Ovary (tissue), 10 donors: ENCODE measurements at regions of chr4 and their contacts with region 1.

Region 1: GRCh38 chr4:178215763-178216162 is 773.5 kb upstream of the AGA start:
- DNase-seq: no peak
- H3K4me3 ChIP-seq: no peak overlapping the region
- H3K27ac ChIP-seq: no peak overlapping the region
- H3K4me1 ChIP-seq: no peaks in the 10 kb centered on the region
- H3K27me3 ChIP-seq: peaks cover 3% of the 10 kb centered on the region
- CTCF ChIP-seq: no peak
- EP300 ChIP-seq: no peak
- POLR2A ChIP-seq: no peak

Region 2: GRCh38 chr4:178136736-178137345 is 78.9 kb before region 1 on chr4:
- intact Hi-C with region 1: loop called in 1 of 4 experiments (anchors 5 kb)
- DNase-seq: no peak
- H3K4me3 ChIP-seq: no peak overlapping the region
- H3K27ac ChIP-seq: no peak overlapping the region
- H3K4me1 ChIP-seq: no peaks in the 10 kb centered on the region
- H3K27me3 ChIP-seq: no peaks in the 10 kb centered on the region
- CTCF ChIP-seq: no peak
- EP300 ChIP-seq: no peak
- POLR2A ChIP-seq: no peak